Activated naive CD4-positive, alpha-beta T cell treated with anti-CD3 and anti-CD28 coated beads for 36 hours (primary cell): ENCODE measurements at regions of chr2 and their contacts with region 1.

Region 1: GRCh38 chr2:198080879-198081765 is 276.7 kb downstream of the PLCL1 start:
- DNase-seq: no peak
- H3K4me3 Mint-ChIP-seq: no peak overlapping the region
- H3K27ac Mint-ChIP-seq: no peak overlapping the region
- H3K4me1 Mint-ChIP-seq: peaks cover 14% of the 10 kb centered on the region
- H3K27me3 Mint-ChIP-seq: no peaks in the 10 kb centered on the region

Region 2: GRCh38 chr2:198065322-198065721 is 15.8 kb before region 1 on chr2:
- CTCF ChIA-PET with region 1: interaction called, 4 read pairs
- intact Hi-C with region 1: loop called (anchors 2 kb)
- DNase-seq: no peak
- H3K4me3 Mint-ChIP-seq: no peak overlapping the region
- H3K27ac Mint-ChIP-seq: no peak overlapping the region
- H3K4me1 Mint-ChIP-seq: peaks cover 11% of the 10 kb centered on the region
- H3K27me3 Mint-ChIP-seq: no peaks in the 10 kb centered on the region